ENCODE measurements at regions of chr14 and their contacts with region 1.

Region 1: GRCh38 chr14:47541662-47542061 is 133.7 kb downstream of the MDGA2 start:
- DNase-seq: no peak
- ATAC-seq: no peak
- H3K4me3 ChIP-seq: no peak overlapping the region
- H3K4me3 Mint-ChIP-seq: no peak overlapping the region
- H3K27ac ChIP-seq: no peak overlapping the region
- H3K27ac Mint-ChIP-seq: no peak overlapping the region
- H3K4me1 ChIP-seq: no peaks in the 10 kb centered on the region
- H3K4me1 Mint-ChIP-seq: no peaks in the 10 kb centered on the region
- H3K27me3 ChIP-seq: no peaks in the 10 kb centered on the region
- H3K27me3 Mint-ChIP-seq: no peaks in the 10 kb centered on the region
- CTCF ChIP-seq: no peak

Region 2: DNA sequence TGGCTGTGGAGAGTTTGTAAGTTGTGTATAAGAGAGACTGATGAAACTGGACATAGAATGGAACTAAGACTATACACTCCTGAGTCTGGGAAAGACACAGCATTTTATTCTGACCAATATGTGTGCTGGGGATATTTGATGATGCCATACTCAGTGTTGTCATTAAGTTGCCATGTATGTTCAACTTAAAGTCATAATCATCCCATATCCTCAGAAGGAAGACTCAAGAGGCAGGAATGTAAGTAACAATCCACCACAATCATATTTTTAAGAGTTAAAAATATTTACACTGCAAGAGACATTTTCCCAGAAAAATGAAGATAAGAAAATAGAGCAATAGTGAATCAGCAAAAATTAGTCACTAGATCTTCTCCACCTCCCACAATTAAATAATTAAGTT is 13.7 kb after region 1 on chr14:
- CTCF ChIA-PET with region 1: no interaction called
- POLR2A ChIA-PET with region 1: no interaction called
- intact Hi-C with region 1: loop called in 1 of 2 experiments (anchors 1 kb)
- DNase-seq: no peak
- ATAC-seq: no peak
- H3K4me3 ChIP-seq: no peak overlapping the region
- H3K4me3 Mint-ChIP-seq: no peak overlapping the region
- H3K27ac ChIP-seq: no peak overlapping the region
- H3K27ac Mint-ChIP-seq: no peak overlapping the region
- H3K4me1 ChIP-seq: no peaks in the 10 kb centered on the region
- H3K4me1 Mint-ChIP-seq: no peaks in the 10 kb centered on the region
- H3K27me3 ChIP-seq: no peaks in the 10 kb centered on the region
- H3K27me3 Mint-ChIP-seq: no peaks in the 10 kb centered on the region
- CTCF ChIP-seq: no peak

Region 3: GRCh38 chr14:47730296-47730695 is 188.6 kb after region 1 on chr14:
- CTCF ChIA-PET with region 1: no interaction called
- POLR2A ChIA-PET with region 1: no interaction called
- intact Hi-C with region 1: no loop called
- DNase-seq: no peak
- ATAC-seq: no peak
- H3K4me3 ChIP-seq: no peak overlapping the region
- H3K4me3 Mint-ChIP-seq: no peak overlapping the region
- H3K27ac ChIP-seq: no peak overlapping the region
- H3K27ac Mint-ChIP-seq: no peak overlapping the region
- H3K4me1 ChIP-seq: no peaks in the 10 kb centered on the region
- H3K4me1 Mint-ChIP-seq: no peaks in the 10 kb centered on the region
- H3K27me3 ChIP-seq: no peaks in the 10 kb centered on the region
- H3K27me3 Mint-ChIP-seq: no peaks in the 10 kb centered on the region
- CTCF ChIP-seq: no peak